T-cell (primary cell): ENCODE measurements at regions of chr2 and their contacts with region 1.

Region 1: DNA sequence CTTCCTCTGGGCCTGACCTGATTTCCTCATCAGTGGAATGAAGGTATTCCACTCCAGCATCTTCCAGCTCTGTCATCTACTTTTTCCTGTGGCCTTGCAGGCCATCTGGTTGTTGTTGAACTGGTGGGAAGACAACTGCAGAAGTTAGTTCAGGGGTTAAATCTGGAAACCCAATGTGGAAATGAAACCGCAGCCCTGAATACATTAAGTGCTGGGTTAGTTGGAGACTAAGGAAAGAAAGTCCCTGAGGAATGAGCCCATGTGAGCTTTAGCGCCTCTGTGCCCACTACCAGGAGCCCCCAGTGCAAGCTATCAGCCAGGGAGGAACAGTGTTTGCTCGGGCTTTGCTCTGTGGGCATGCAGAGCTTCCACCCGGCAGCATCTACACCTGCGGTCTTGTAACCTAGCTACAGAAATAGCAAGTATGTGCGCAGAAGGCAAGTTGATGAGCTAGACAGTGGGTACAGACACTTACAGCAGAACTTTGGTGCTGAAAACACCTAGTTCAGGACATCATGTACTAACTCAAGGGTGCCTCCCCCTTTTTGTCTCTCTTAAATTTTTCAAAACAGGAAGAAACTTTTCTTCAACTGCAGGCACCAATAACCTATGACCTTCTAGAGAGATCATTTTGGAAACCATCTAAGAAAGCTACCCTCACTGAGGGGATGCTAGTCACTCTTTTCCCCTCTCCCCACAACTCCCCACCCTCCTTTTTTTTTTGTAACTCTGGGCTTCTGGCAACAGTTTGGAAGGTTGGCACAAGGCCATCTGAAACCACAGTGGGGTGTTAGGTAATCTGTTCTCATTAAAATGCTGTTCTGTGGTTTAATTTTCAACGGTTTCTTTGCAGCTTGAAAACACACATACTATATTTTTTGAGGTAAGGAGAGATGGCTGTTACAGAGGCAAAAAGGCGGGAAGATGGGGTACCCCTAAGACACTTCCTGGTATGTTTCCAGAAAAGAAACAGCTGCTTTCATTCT is 18.3 kb upstream of the CXCR4 start:
- DNase-seq: peak; percentile 50 to 96 (median 88)
- ATAC-seq: peak; percentile 71 to 82 (median 77)
- H3K4me3 ChIP-seq: peak overlapping the region in 1 of 2 donors; percentile 26
- H3K4me3 Mint-ChIP-seq: peak overlapping the region; percentile 69 to 75 (median 71)
- H3K27ac ChIP-seq: peak overlapping the region; percentile 100
- H3K27ac Mint-ChIP-seq: peak overlapping the region; percentile 96 to 97
- H3K4me1 ChIP-seq: peaks cover 57 to 94% of the 10 kb centered on the region in 2 experiments
- H3K4me1 Mint-ChIP-seq: peaks cover 97 to 98% (median 97%) of the 10 kb centered on the region in 3 donors
- H3K27me3 ChIP-seq: no peaks in the 10 kb centered on the region
- H3K27me3 Mint-ChIP-seq: no peaks in the 10 kb centered on the region

Region 2: DNA sequence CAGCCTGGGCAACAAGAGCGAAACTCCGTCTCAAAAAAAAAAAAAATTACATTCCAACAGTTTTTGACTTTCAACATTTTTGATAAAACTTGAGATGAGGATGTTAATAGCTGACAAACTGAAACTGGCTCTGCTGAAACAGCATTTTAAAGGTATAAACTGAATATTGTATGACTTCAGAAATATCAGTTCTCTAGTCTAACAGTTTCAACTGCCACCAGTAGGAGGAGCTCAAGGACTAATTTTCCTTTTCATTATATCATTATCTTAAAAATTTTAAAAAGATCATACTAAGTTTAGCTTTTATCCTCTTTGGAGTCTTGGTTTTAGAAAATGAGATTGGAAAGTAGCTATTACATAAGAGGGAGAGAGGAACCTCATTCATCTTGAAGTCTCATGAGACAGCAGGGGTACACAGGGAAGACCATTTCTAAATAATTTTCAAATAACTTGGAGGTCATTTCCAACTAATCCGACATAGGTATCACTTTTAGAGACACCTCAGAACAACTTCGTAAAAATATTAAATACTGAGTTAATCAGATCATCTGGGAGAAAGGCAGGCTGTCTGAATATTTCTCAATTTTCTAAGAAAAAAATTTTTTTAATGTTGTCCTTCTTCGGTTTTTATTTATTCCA is 222.4 kb before region 1 on chr2:
- CTCF ChIA-PET with region 1: interaction called, 4 to 11 read pairs
- POLR2A ChIA-PET with region 1: interaction called in 1 of 2 experiments, 3 read pairs
- DNase-seq: peak in 19 of 35 experiments; percentile 14 to 83 (median 43)
- ATAC-seq: peak in 3 of 4 experiments; percentile 47 to 56 (median 49)
- H3K4me3 ChIP-seq: no peak overlapping the region
- H3K4me3 Mint-ChIP-seq: no peak overlapping the region
- H3K27ac ChIP-seq: no peak overlapping the region
- H3K27ac Mint-ChIP-seq: peak overlapping the region in 1 of 2 donors; percentile 52
- H3K4me1 ChIP-seq: no peaks in the 10 kb centered on the region
- H3K4me1 Mint-ChIP-seq: peaks cover 0 to 10% (median 10%) of the 10 kb centered on the region in 3 donors
- H3K27me3 ChIP-seq: no peaks in the 10 kb centered on the region
- H3K27me3 Mint-ChIP-seq: no peaks in the 10 kb centered on the region

Region 3: GRCh38 chr2:136081582-136082210 is 54.5 kb before region 1 on chr2:
- CTCF ChIA-PET with region 1: no interaction called
- POLR2A ChIA-PET with region 1: no interaction called
- DNase-seq: no peak
- ATAC-seq: no peak
- H3K4me3 ChIP-seq: no peak overlapping the region
- H3K4me3 Mint-ChIP-seq: no peak overlapping the region
- H3K27ac ChIP-seq: no peak overlapping the region
- H3K27ac Mint-ChIP-seq: no peak overlapping the region
- H3K4me1 ChIP-seq: no peaks in the 10 kb centered on the region
- H3K4me1 Mint-ChIP-seq: peaks cover 0 to 8% (median 6%) of the 10 kb centered on the region in 3 donors
- H3K27me3 ChIP-seq: no peaks in the 10 kb centered on the region
- H3K27me3 Mint-ChIP-seq: no peaks in the 10 kb centered on the region

Region 4: DNA sequence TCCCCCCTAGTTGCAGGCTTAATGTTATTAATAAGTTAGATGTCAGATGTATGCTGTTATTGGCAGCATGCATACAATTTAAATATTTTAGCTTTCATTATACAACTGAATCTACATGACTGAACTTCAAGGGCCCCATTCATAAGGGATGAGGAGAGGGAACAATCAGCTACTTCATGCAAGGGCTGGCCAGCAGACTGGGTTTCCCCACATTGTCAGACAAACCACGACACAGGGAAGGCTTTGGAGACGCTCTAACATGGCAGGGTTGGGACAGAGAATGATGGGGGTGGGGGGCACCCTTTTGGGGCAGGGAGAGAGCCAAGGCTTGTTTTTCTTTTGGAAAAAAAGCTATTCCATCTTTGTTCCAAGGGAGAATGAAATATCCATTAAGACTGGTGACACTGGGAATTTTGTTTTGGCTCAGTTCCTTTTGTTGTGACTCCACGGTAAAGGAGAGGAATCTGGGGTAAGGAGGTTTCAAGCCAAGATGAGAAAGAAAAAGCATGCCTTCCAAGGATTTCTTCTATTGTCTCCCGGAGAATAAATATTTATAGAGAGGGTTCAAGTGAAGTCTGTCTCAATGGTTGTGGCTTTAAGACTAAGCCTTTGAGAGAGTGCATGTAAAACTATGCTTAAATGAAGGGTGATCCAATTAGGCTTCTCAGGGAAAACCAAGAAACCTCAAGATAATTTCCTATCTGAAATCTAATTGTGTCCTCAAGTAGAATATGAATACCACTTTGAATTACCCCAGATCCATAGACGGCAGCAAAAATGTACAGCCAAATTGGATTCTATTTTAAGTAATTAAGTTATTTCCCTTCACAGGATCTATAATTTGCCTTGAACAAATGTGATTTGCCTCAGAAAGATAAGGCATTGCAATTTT is 23.7 kb before region 1 on chr2:
- CTCF ChIA-PET with region 1: interaction called in 1 of 2 experiments, 3 read pairs
- POLR2A ChIA-PET with region 1: interaction called, 23 to 24 read pairs
- DNase-seq: peak in 2 of 35 experiments; percentile 46 to 55
- ATAC-seq: peak in 1 of 4 experiments; percentile 3
- H3K4me3 ChIP-seq: no peak overlapping the region
- H3K4me3 Mint-ChIP-seq: peak overlapping the region in 2 of 3 donors; percentile 94 to 99
- H3K27ac ChIP-seq: peak overlapping the region; percentile 6
- H3K27ac Mint-ChIP-seq: peak overlapping the region; percentile 58 to 70
- H3K4me1 ChIP-seq: peaks cover 16 to 20% of the 10 kb centered on the region in 2 experiments
- H3K4me1 Mint-ChIP-seq: peaks cover 51 to 53% (median 53%) of the 10 kb centered on the region in 3 donors
- H3K27me3 ChIP-seq: no peaks in the 10 kb centered on the region
- H3K27me3 Mint-ChIP-seq: no peaks in the 10 kb centered on the region

Region 5: GRCh38 chr2:136191041-136191440 is 54.8 kb after region 1 on chr2:
- CTCF ChIA-PET with region 1: no interaction called
- POLR2A ChIA-PET with region 1: no interaction called
- DNase-seq: no peak
- ATAC-seq: no peak
- H3K4me3 ChIP-seq: no peak overlapping the region
- H3K4me3 Mint-ChIP-seq: no peak overlapping the region
- H3K27ac ChIP-seq: no peak overlapping the region
- H3K27ac Mint-ChIP-seq: no peak overlapping the region
- H3K4me1 ChIP-seq: no peaks in the 10 kb centered on the region
- H3K4me1 Mint-ChIP-seq: peaks cover 0 to 5% (median 3%) of the 10 kb centered on the region in 3 donors
- H3K27me3 ChIP-seq: no peaks in the 10 kb centered on the region
- H3K27me3 Mint-ChIP-seq: no peaks in the 10 kb centered on the region

Region 6: DNA sequence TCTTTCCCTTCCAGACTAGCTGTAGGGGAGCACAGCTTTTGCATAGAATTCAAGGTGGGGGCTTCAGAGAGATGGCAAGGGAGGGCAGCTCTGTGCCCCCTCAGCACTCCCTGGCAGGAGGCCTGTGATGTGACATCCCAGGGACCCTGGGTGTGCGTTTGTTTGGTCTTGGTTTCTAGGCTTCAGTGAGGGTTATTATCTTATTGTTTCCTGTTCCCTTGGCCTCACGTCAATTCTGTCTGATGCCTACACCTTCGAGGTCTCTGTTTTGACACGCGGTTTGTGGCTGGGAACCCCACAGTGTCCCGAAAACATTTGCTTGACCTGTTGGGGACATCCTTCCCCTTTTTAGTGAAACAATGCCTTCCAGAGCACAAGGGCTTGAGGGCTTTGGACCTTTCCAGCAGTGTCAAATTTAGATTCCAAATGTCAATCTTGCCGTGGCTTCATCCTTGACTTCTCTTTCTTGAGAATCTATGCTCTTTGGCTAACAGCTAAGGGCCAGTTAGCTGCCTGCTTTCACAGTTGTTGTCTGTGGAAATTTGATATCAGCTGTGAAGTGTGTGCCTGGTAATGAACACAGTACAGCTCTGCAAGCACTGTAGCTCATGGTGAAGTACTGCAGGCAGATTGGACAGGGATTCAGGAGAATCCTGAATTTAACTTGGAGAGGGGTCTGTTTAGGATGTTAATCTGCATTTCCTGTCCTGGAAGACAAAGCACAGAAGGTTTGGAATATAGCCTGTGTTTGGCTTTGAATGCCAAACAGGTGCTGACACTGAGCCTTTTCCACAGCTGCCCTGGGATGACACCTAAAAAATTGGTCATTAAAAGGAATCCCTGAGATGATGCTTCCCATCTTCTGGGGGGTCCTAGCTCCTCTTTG is 90.0 kb after region 1 on chr2:
- CTCF ChIA-PET with region 1: interaction called in 1 of 2 experiments, 4 read pairs
- POLR2A ChIA-PET with region 1: interaction called, 4 to 12 read pairs
- DNase-seq: peak in 34 of 35 experiments; percentile 24 to 82 (median 56)
- ATAC-seq: peak; percentile 58 to 92 (median 75)
- H3K4me3 ChIP-seq: no peak overlapping the region
- H3K4me3 Mint-ChIP-seq: no peak overlapping the region
- H3K27ac ChIP-seq: peak overlapping the region; percentile 48
- H3K27ac Mint-ChIP-seq: peak overlapping the region; percentile 65 to 77
- H3K4me1 ChIP-seq: peaks cover 0 to 17% of the 10 kb centered on the region in 2 experiments
- H3K4me1 Mint-ChIP-seq: peaks cover 21 to 36% (median 26%) of the 10 kb centered on the region in 3 donors
- H3K27me3 ChIP-seq: no peaks in the 10 kb centered on the region
- H3K27me3 Mint-ChIP-seq: no peaks in the 10 kb centered on the region

Region 7: GRCh38 chr2:136281281-136282114 is 145.3 kb after region 1 on chr2:
- CTCF ChIA-PET with region 1: interaction called in 1 of 2 experiments, 12 read pairs
- POLR2A ChIA-PET with region 1: interaction called, 5 to 14 read pairs
- DNase-seq: peak; percentile 18 to 88 (median 64)
- ATAC-seq: peak; percentile 77 to 90 (median 79)
- H3K4me3 ChIP-seq: no peak overlapping the region
- H3K4me3 Mint-ChIP-seq: peak overlapping the region; percentile 21 to 74 (median 31)
- H3K27ac ChIP-seq: peak overlapping the region; percentile 81
- H3K27ac Mint-ChIP-seq: peak overlapping the region; percentile 95
- H3K4me1 ChIP-seq: peaks cover 13 to 24% of the 10 kb centered on the region in 2 experiments
- H3K4me1 Mint-ChIP-seq: peaks cover 44 to 65% (median 47%) of the 10 kb centered on the region in 3 donors
- H3K27me3 ChIP-seq: no peaks in the 10 kb centered on the region
- H3K27me3 Mint-ChIP-seq: no peaks in the 10 kb centered on the region

Region 8: DNA sequence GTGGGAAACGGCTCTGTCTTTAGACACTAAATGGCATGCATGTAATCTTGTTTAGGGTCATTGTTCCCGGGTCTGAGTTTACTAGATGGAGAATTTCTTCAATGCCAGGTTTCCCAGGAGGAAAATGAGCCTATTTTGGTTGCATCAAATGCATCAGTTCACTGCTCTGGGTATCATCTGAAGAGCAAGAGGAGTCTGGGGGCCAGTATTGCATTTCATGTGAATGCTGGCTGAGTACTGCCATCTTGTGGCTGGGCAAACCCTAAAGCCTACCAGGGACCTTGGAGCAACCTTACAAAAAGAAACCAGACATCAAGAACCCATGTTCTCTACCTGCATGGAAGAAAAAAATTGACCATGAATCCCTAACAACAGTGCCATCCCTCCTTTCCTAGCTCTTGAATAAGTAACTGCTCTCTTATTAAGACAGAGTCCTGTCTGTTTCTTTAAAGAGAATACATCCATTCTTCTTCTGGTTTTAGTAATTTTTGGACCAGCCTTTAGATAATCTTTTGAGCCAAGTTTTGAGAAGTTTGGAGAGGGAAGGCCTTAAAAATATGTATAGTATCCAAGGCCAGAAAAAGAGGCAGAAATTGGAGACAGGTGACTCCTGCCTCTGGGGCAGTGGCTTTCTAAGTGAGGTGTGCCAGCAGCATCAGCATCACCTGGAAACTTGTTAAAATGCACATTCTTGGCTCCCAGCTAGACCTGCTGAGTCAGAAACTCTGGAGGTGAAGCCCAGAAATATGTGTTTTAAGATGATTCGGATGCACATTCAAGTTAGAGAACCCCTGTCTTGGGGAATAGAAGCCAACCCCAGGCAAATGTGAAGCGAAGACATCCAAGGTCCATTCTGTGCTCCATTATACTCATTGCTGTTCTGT is 242.7 kb after region 1 on chr2:
- CTCF ChIA-PET with region 1: interaction called, 3 to 15 read pairs
- POLR2A ChIA-PET with region 1: interaction called, 8 to 25 read pairs
- DNase-seq: peak; percentile 53 to 88 (median 74)
- ATAC-seq: peak; percentile 13 to 65 (median 60)
- H3K4me3 ChIP-seq: no peak overlapping the region
- H3K4me3 Mint-ChIP-seq: no peak overlapping the region
- H3K27ac ChIP-seq: no peak overlapping the region
- H3K27ac Mint-ChIP-seq: peak overlapping the region in 1 of 2 donors; percentile 19
- H3K4me1 ChIP-seq: peaks cover 11 to 28% of the 10 kb centered on the region in 2 experiments
- H3K4me1 Mint-ChIP-seq: peaks cover 65 to 82% (median 76%) of the 10 kb centered on the region in 3 donors
- H3K27me3 ChIP-seq: no peaks in the 10 kb centered on the region
- H3K27me3 Mint-ChIP-seq: no peaks in the 10 kb centered on the region